ENCODE measurements at regions of chr12 and their contacts with region 1.

Region 1: DNA sequence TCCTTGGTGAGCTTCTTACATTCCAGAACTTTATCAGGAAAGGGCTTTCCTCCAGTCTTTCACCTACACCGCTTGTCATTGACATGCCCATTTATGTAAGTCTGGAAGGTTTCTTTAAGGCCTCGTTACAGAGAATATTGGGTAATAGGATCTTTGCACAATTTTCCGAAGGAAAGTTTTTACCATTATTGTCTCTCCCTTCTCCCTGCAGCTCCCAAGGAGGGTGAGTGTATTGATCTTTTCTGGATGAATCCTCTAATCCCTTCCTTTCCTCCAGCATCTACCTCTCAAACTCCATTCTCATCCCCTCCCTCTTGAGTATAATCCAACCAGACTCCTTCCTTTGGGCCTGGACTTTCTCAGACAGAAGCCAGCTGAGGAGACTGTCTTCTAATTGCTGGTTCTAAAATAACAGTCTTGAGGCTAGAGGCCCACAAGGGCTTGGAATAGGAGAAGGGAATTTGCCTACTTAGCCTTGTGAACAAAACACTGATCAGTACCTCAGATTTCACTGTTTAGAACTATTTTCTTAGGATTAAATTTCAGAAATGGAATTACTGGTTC is 21.8 kb downstream of the WNK1 start:
- DNase-seq: no peak
- ATAC-seq: no peak
- H3K4me3 Mint-ChIP-seq: no peak overlapping the region
- H3K27ac Mint-ChIP-seq: peak overlapping the region; percentile 38
- H3K4me1 Mint-ChIP-seq: peaks cover 73% of the 10 kb centered on the region
- H3K27me3 Mint-ChIP-seq: no peaks in the 10 kb centered on the region
- CTCF ChIP-seq: no peak

Region 2: GRCh38 chr12:789852-790563 is 15.9 kb after region 1 on chr12:
- CTCF ChIA-PET with region 1: no interaction called
- POLR2A ChIA-PET with region 1: interaction called, 4 read pairs
- intact Hi-C with region 1: loop called (anchors 2 kb)
- DNase-seq: no peak
- ATAC-seq: peak; percentile 25
- H3K4me3 Mint-ChIP-seq: no peak overlapping the region
- H3K27ac Mint-ChIP-seq: peak overlapping the region; percentile 3
- H3K4me1 Mint-ChIP-seq: peaks cover 67% of the 10 kb centered on the region
- H3K27me3 Mint-ChIP-seq: no peaks in the 10 kb centered on the region
- CTCF ChIP-seq: no peak

Region 3: GRCh38 chr12:1013618-1014489 is 239.7 kb after region 1 on chr12:
- CTCF ChIA-PET with region 1: no interaction called
- POLR2A ChIA-PET with region 1: no interaction called
- intact Hi-C with region 1: no loop called
- DNase-seq: no peak
- ATAC-seq: no peak
- H3K4me3 Mint-ChIP-seq: no peak overlapping the region
- H3K27ac Mint-ChIP-seq: no peak overlapping the region
- H3K4me1 Mint-ChIP-seq: no peaks in the 10 kb centered on the region
- H3K27me3 Mint-ChIP-seq: no peaks in the 10 kb centered on the region
- CTCF ChIP-seq: no peak